Adrenal gland (tissue), 19 donors: ENCODE measurements at regions of chr13 and their contacts with region 1.

Region 1: GRCh38 chr13:26698392-26699196 is 62.0 kb downstream of the GPR12 start:
- DNase-seq: peak; percentile 70 to 94 (median 82)
- H3K4me3 ChIP-seq: peak overlapping the region in 1 of 4 donors; percentile 14
- H3K27ac ChIP-seq: no peak overlapping the region
- H3K4me1 ChIP-seq: peaks cover 0 to 4% of the 10 kb centered on the region in 2 donors
- H3K27me3 ChIP-seq: no peaks in the 10 kb centered on the region
- CTCF ChIP-seq: peak; percentile 94 to 99 (median 98)
- POLR2A ChIP-seq: no peak

Region 2: DNA sequence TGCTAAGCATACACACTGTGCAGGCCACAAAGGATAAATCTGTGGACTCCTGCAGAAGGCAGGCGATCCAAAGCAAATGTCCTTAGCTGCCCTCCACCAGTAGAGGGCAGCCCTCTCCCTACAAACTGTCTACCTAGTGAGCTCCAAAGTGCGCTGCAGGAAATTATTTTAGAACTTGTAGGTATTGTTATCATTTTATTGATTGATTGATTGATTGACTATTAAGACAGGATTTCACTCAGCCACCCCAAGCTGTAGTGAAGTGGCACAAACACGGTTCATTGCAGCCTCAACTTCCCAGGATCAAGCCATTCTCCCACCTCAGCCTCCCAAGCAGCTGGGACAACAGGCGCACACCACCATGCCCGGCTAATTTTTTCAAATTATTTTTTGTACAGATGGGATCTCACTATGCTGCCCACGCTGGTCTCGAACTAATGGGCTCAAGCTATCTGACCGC is 513.8 kb before region 1 on chr13:
- intact Hi-C with region 1: loop called in 1 of 2 experiments (anchors 5 kb)
- DNase-seq: peak; percentile 66 to 86 (median 75)
- H3K4me3 ChIP-seq: no peak overlapping the region
- H3K27ac ChIP-seq: no peak overlapping the region
- H3K4me1 ChIP-seq: peaks cover 5 to 24% of the 10 kb centered on the region in 2 donors
- H3K27me3 ChIP-seq: no peaks in the 10 kb centered on the region
- CTCF ChIP-seq: peak; percentile 75 to 91 (median 85)
- POLR2A ChIP-seq: no peak

Region 3: GRCh38 chr13:26406791-26407190 is 291.8 kb before region 1 on chr13:
- intact Hi-C with region 1: loop called in 1 of 2 experiments (anchors 10 kb)
- DNase-seq: no peak
- H3K4me3 ChIP-seq: no peak overlapping the region
- H3K27ac ChIP-seq: no peak overlapping the region
- H3K4me1 ChIP-seq: peaks cover 0 to 3% of the 10 kb centered on the region in 2 donors
- H3K27me3 ChIP-seq: no peaks in the 10 kb centered on the region
- CTCF ChIP-seq: no peak
- POLR2A ChIP-seq: no peak

Region 4: DNA sequence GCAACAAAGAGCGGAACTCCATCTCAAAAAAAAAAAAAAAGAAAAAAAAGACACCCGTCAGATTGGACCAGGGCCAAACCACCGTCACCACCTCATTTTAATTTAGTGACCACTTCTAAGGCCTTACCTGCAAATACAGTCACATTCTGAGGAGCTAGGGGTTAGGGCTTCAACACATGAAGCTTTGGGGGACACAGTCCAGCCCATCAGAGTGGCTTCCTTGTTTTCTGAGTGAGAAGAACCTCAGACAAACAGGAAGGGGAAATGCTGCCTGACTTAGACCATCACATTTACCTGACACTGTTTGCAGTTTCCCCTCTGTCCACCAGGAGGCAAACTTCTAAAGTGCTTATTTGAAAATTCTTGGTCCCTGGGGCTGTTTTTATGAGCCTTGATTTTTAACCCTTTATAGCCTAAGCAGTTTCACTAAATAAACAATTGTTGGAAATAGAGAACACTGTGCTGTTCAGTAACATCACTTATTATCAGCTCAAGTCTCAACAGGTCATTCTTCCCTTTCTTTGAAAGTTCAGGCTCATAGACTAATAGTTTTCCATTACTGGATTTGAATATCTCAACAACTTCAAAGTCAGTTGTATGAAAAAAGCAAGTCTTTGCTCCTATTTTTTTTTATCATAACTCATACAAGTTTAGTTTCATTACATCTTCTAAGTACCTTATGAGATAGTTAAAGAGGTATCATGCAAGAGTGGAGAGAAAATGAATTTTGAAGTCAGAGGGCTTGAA is 216.0 kb before region 1 on chr13:
- intact Hi-C with region 1: loop called in 1 of 2 experiments (anchors 2 kb)
- DNase-seq: peak; percentile 62 to 92 (median 78)
- H3K4me3 ChIP-seq: peak overlapping the region in 1 of 4 donors; percentile 42
- H3K27ac ChIP-seq: no peak overlapping the region
- H3K4me1 ChIP-seq: no peaks in the 10 kb centered on the region
- H3K27me3 ChIP-seq: no peaks in the 10 kb centered on the region
- CTCF ChIP-seq: peak; percentile 68 to 89 (median 88)
- POLR2A ChIP-seq: no peak

Region 5: GRCh38 chr13:26498656-26499591 is 199.7 kb before region 1 on chr13:
- intact Hi-C with region 1: loop called in 1 of 2 experiments (anchors 5 kb)
- DNase-seq: no peak
- H3K4me3 ChIP-seq: no peak overlapping the region
- H3K27ac ChIP-seq: peak overlapping the region in 1 of 5 donors; percentile 14
- H3K4me1 ChIP-seq: no peaks in the 10 kb centered on the region
- H3K27me3 ChIP-seq: no peaks in the 10 kb centered on the region
- CTCF ChIP-seq: no peak
- POLR2A ChIP-seq: no peak